Mucosa of descending colon (tissue), 3 donors: ENCODE measurements at regions of chr22 and their contacts with region 1.

Region 1: GRCh38 chr22:17501679-17502285 is 61.5 kb upstream of the SLC25A18 start:
- DNase-seq: peak in 1 of 3 donors; percentile 76
- ATAC-seq: peak; percentile 76
- H3K4me3 ChIP-seq: no peak overlapping the region
- H3K4me1 ChIP-seq: no peaks in the 10 kb centered on the region
- CTCF ChIP-seq: no peak

Region 2: GRCh38 chr22:17077255-17077654 is 424.5 kb before region 1 on chr22:
- intact Hi-C with region 1: loop called (anchors 10 kb)
- DNase-seq: no peak
- ATAC-seq: no peak
- H3K4me3 ChIP-seq: no peak overlapping the region
- H3K4me1 ChIP-seq: no peaks in the 10 kb centered on the region
- CTCF ChIP-seq: no peak